K562 (cell line): ENCODE measurements at regions of chr1 and their contacts with region 1.

Region 1: DNA sequence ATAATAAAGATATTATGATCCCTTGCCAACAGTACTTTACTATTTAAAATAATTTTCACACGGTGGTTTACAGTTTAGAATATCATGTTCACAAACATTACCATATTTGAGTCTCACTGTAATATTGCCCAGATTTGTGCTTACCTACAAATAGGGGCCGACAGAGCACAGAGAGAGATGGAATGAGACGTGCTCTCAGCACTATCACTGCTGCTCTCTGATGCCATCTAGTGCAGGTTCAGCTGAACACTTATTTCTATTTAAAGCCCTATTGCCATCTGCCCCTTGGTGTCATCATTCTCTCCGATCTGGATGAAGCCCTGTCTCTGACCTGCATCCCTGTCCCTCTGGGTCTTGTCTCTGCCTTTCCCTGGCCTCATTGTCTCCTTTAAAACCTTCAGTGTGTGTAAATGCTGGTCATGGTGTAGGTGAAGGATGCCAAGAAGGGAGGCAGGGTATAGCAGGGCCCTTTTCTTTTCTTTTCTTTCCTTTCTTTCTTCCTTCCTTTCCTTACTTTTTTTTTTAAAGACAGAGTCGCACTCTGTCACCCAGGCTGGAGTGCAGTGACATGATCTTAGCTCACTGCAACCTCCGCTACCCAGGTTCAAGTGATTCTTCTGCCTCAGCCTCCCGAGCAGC is 6.9 kb upstream of the GPATCH4 start:
- DNase-seq: peak; percentile 49 to 80 (median 61)
- ATAC-seq: peak; percentile 98
- H3K4me3 ChIP-seq: no peak overlapping the region
- H3K27ac ChIP-seq: no peak overlapping the region
- H3K4me1 ChIP-seq: peaks cover 0 to 2% of the 10 kb centered on the region in 2 experiments; a peak in 2 of 5 replicates
- H3K27me3 ChIP-seq: no peaks in the 10 kb centered on the region
- CTCF ChIP-seq: peak; percentile 83 to 95 (median 94)
- EP300 ChIP-seq: no peak
- POLR2A ChIP-seq: no peak
- RAD21 ChIP-seq: peak; percentile 70 to 87

Region 2: DNA sequence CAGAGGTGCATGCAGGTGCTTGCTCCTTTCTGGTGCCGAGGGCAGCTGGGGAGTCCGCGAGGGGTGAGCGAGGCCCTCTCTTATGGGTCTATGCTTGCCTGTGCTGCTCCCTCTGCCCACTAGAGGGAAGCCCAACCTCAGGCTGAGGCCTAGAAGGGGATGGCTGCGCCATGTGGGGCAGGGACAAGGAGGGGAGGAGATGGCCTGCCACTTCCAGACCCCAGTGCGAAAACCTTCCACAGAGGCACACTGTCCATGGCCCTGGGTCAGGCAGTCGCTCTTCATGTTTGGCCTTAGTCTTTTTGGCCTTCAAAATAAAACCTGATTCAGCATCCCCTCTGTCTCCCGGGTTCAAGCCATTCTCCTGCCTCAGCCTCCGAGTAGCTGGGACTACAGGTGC is 225.1 kb before region 1 on chr1:
- CTCF ChIA-PET with region 1: interaction called, 11 read pairs
- POLR2A ChIA-PET with region 1: no interaction called
- in situ Hi-C with region 1: loop called (anchors 5 kb)
- intact Hi-C with region 1: loop called (anchors 2 kb)
- DNase-seq: peak; percentile 80 to 86 (median 84)
- ATAC-seq: peak; percentile 98
- H3K4me3 ChIP-seq: no peak overlapping the region
- H3K27ac ChIP-seq: no peak overlapping the region
- H3K4me1 ChIP-seq: peaks cover 8 to 10% of the 10 kb centered on the region in 2 experiments; a peak in 3 of 5 replicates
- H3K27me3 ChIP-seq: peaks cover 5 to 13% of the 10 kb centered on the region in 2 experiments; a peak in 3 of 5 replicates
- CTCF ChIP-seq: peak; percentile 89 to 92 (median 90)
- EP300 ChIP-seq: no peak
- POLR2A ChIP-seq: no peak
- RAD21 ChIP-seq: peak; percentile 78 to 92

Region 3: DNA sequence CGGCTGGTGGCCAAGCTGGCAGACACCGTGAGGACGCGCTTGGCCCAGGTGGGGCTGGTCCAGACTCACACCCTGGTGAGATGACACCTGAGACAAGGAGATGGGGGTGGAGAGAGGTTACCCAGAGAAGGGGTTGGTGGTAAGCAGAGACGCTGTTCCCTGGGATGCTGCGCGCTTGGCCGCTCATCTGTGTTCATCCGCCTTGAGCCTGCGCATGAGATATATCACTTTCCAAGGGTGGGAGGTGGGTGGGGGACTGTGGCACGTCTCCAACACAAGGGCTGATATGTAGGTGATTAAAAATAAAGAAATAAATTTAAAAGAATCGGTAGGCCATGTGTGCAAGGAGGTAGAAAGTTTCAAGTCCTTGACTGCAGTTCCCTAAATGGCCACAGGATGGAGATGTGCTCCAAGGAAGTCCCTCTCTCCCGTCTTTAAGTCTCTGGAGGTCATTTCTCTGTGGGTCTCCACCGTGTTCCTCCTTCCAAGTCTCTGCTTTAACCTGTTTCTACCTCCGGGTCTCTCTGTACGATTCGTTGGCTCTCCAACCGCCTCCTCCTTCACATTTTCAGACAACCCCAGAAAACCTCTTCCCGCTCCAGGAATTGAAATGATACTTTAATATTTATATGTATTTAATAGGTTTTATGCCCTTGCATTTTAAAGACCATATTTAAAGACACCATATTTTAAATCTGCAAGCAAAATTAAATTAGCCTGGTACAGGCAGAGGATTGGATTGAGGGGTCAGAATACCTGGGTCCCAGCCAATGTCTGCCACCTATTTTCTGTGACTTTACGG is 24.1 kb before region 1 on chr1:
- CTCF ChIA-PET with region 1: interaction called, 77 read pairs
- POLR2A ChIA-PET with region 1: interaction called, 4 read pairs
- in situ Hi-C with region 1: no loop called
- intact Hi-C with region 1: loop called (anchors 1 kb)
- DNase-seq: peak; percentile 77 to 89 (median 82)
- ATAC-seq: peak; percentile 81
- H3K4me3 ChIP-seq: no peak overlapping the region
- H3K27ac ChIP-seq: no peak overlapping the region
- H3K4me1 ChIP-seq: peaks cover 0 to 10% of the 10 kb centered on the region in 2 experiments; a peak in 3 of 5 replicates
- H3K27me3 ChIP-seq: no peaks in the 10 kb centered on the region
- CTCF ChIP-seq: peak; percentile 88 to 98 (median 90)
- EP300 ChIP-seq: no peak
- POLR2A ChIP-seq: no peak
- RAD21 ChIP-seq: peak; percentile 79 to 92